ENCODE measurements at regions of chr4 and their contacts with region 1.

Region 1: GRCh38 chr4:182486881-182487280 is 243.7 kb downstream of the TENM3 start:
- DNase-seq: no peak
- ATAC-seq: no peak

Region 2: GRCh38 chr4:182925298-182925738 is 438.4 kb after region 1 on chr4:
- intact Hi-C with region 1: loop called (anchors 10 kb)
- DNase-seq: peak; percentile 74
- ATAC-seq: peak; percentile 91

Measured in left ventricle myocardium superior (tissue), 1 donor.